ENCODE measurements at regions of chr2 and their contacts with region 1.

Region 1: GRCh38 chr2:84881581-84882414 is 914 bp upstream of the TRABD2A start:
- DNase-seq: peak; percentile 81 to 88 (median 82)
- H3K4me3 ChIP-seq: peak overlapping the region; percentile 39
- H3K27ac ChIP-seq: peak overlapping the region in 1 of 2 donors; percentile 25
- H3K4me1 ChIP-seq: peaks cover 12% of the 10 kb centered on the region
- H3K27me3 ChIP-seq: no peaks in the 10 kb centered on the region
- CTCF ChIP-seq: peak; percentile 64 to 69 (median 68)
- EP300 ChIP-seq: no peak
- POLR2A ChIP-seq: no peak

Region 2: DNA sequence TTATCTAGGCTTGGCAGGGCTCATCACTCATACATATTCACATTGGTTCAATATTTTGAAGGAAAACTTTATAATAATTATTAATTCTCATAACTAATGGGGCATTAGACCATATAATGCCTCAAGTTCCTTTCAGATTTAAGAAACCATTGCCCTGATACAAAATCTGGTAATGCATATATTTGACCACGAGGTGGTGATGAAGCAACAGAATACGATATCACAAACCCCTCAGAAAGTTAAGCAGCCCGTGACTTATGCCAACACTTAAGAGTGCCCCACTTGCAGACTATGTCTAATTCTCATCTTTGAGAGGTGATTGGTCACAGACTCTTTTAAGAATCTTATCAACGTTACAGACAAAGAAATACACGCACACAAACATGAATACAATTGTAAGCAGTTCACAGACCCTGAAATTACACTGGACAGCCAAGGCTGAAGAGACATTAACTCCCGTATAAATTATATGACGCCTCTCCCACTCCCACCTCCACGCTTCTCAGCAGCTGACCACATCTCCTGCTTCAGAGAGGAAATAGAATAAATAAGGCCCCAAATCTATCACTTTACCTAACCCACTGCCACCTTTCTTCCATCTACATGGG is 386.2 kb before region 1 on chr2:
- intact Hi-C with region 1: loop called in 1 of 4 experiments (anchors 10 kb)
- DNase-seq: no peak
- H3K4me3 ChIP-seq: no peak overlapping the region
- H3K27ac ChIP-seq: no peak overlapping the region
- H3K4me1 ChIP-seq: no peaks in the 10 kb centered on the region
- H3K27me3 ChIP-seq: no peaks in the 10 kb centered on the region
- CTCF ChIP-seq: peak; percentile 32 to 69 (median 46)
- EP300 ChIP-seq: no peak
- POLR2A ChIP-seq: no peak

Region 3: DNA sequence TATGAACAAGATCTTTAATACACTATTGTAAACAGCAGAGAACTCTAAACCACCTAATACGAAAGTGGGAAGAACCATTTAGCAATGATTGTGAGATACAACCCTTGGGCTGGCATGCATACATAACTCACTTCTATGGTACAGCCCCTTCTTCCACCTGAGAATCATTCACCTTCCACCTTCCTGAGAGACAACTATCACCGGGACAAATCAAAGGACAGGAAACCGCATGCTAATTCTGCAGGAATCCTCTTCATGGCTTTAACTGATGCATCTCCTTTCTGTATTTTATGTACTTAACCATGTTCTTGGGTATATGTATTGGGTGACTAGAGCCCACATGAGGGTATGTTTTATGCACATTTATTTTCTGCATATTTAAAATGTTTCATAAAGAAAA is 124.2 kb before region 1 on chr2:
- intact Hi-C with region 1: no loop called
- DNase-seq: no peak
- H3K4me3 ChIP-seq: no peak overlapping the region
- H3K27ac ChIP-seq: no peak overlapping the region
- H3K4me1 ChIP-seq: no peaks in the 10 kb centered on the region
- H3K27me3 ChIP-seq: no peaks in the 10 kb centered on the region
- CTCF ChIP-seq: no peak
- EP300 ChIP-seq: no peak
- POLR2A ChIP-seq: no peak

Region 4: GRCh38 chr2:84807063-84807830 is 74.6 kb before region 1 on chr2:
- intact Hi-C with region 1: loop called in 1 of 4 experiments (anchors 10 kb)
- DNase-seq: peak; percentile 24 to 72 (median 52)
- H3K4me3 ChIP-seq: no peak overlapping the region
- H3K27ac ChIP-seq: peak overlapping the region in 1 of 2 donors; percentile 21
- H3K4me1 ChIP-seq: peaks cover 5% of the 10 kb centered on the region
- H3K27me3 ChIP-seq: no peaks in the 10 kb centered on the region
- CTCF ChIP-seq: no peak
- EP300 ChIP-seq: no peak
- POLR2A ChIP-seq: no peak

Region 5: GRCh38 chr2:84905181-84906107 is 23.6 kb after region 1 on chr2 and contains the start of gene TMSB10:
- intact Hi-C with region 1: loop called in 1 of 4 experiments (anchors 2 kb)
- DNase-seq: peak; percentile 90 to 95 (median 93)
- H3K4me3 ChIP-seq: peak within 1 kb of the TSS; percentile 78
- H3K27ac ChIP-seq: peak within 1 kb of the TSS; percentile 87 to 90
- H3K4me1 ChIP-seq: peaks cover 5% of the 10 kb centered on the region
- H3K27me3 ChIP-seq: no peaks in the 10 kb centered on the region
- CTCF ChIP-seq: peak in 1 of 3 donors; percentile 23
- EP300 ChIP-seq: no peak
- POLR2A ChIP-seq: peak; percentile 85
- total RNA-seq, gene TMSB10: 1,247 to 5,558 (median 2,420) TPM

Region 6: GRCh38 chr2:84925724-84926376 is 44.1 kb after region 1 on chr2:
- intact Hi-C with region 1: loop called in 1 of 4 experiments (anchors 5 kb)
- DNase-seq: peak; percentile 89 to 94 (median 92)
- H3K4me3 ChIP-seq: peak overlapping the region; percentile 28
- H3K27ac ChIP-seq: no peak overlapping the region
- H3K4me1 ChIP-seq: peaks cover 9% of the 10 kb centered on the region
- H3K27me3 ChIP-seq: no peaks in the 10 kb centered on the region
- CTCF ChIP-seq: peak; percentile 91 to 93 (median 92)
- EP300 ChIP-seq: no peak
- POLR2A ChIP-seq: no peak

Region 7: DNA sequence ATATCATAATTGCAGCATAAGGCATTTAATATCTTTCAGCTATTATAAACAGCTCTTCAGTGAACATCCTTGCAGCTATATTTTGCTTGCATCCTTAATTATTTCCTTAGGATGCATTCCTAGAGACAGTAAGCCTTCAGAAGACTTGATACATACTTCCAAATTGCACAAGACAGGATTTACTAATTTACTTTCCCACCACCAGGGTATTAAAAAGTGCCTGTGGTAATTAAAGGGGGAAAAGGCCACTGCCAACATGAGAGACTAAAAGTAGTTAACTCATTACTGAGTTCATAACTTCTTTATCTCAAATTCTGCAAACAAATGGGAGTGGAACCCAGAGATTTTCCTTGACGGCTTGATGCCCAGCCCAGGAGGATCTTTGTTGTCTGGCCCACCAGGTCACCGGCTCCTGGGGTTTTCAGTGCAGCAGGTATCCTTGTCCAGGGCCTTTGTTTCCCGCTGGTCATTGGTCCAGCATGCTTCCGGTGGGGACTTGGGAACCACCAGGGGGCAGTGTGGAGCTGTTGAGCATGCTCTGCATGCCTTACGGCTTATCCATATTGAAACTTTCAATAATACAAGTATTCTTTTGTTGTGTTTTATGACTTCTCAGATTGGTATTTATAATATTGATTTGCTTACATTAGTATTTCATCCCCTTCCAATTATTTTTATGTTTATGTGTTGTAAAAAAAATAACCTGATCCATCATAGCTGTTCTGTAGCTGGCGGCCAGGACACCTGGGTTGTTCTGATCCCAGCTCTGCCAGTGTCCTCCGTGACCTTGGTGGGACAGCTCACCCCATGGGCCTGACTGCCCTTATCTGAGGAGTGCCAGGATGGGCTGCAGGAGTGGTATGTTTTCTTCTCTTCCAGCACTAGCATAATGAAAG is 384.6 kb after region 1 on chr2:
- intact Hi-C with region 1: no loop called
- DNase-seq: peak; percentile 73 to 87 (median 81)
- H3K4me3 ChIP-seq: no peak overlapping the region
- H3K27ac ChIP-seq: no peak overlapping the region
- H3K4me1 ChIP-seq: peaks cover 11% of the 10 kb centered on the region
- H3K27me3 ChIP-seq: no peaks in the 10 kb centered on the region
- CTCF ChIP-seq: peak; percentile 54 to 71 (median 69)
- EP300 ChIP-seq: no peak
- POLR2A ChIP-seq: no peak

Region 8: GRCh38 chr2:86105252-86105968 is 1223.6 kb after region 1 on chr2 and contains the start of gene POLR1A:
- intact Hi-C with region 1: no loop called
- DNase-seq: peak; percentile 86 to 91 (median 87)
- H3K4me3 ChIP-seq: peak within 1 kb of the TSS; percentile 92
- H3K27ac ChIP-seq: peak within 1 kb of the TSS; percentile 67 to 68
- H3K4me1 ChIP-seq: peaks cover 4% of the 10 kb centered on the region
- H3K27me3 ChIP-seq: no peaks in the 10 kb centered on the region
- CTCF ChIP-seq: peak in 2 of 3 donors; percentile 24 to 43
- EP300 ChIP-seq: no peak
- POLR2A ChIP-seq: no peak
- total RNA-seq, gene POLR1A: 11.3 to 43.9 (median 28.8) TPM

Measured in ovary (tissue), 10 donors.